Activated CD8-positive, alpha-beta T cell treated with anti-CD3 and anti-CD28 coated beads, Interleukin-2, amount 10 ng/mL, durations not matched to agents 7 days and 5 days (primary cell): ENCODE measurements at regions of chr3 and their contacts with region 1.

Region 1: DNA sequence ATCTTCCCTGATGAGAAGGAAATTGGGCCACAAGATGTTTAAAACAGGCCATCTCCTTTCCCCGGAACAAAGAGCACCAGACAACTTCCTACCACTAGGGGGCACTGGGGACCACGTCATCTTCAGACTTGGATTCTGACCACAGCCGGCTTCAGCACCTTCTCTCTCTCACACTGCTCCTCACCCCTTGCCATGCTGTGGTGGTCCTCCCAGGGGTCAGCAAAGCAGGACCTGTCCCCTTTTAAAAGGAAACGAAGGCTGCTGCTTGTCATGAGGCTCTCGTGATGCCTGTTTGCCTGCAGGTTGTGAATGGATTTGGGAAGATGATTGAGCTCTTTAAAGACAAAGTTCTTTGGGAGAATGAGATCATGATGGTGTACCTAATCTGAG is 16.2 kb downstream of the RFT1 start:
- DNase-seq: peak; percentile 91
- ATAC-seq: peak; percentile 82
- H3K4me3 Mint-ChIP-seq: no peak overlapping the region
- H3K27ac Mint-ChIP-seq: no peak overlapping the region
- H3K4me1 Mint-ChIP-seq: peaks cover 17% of the 10 kb centered on the region
- H3K27me3 Mint-ChIP-seq: no peaks in the 10 kb centered on the region

Region 2: GRCh38 chr3:52820736-52821135 is 293.3 kb before region 1 on chr3:
- CTCF ChIA-PET with region 1: no interaction called
- POLR2A ChIA-PET with region 1: no interaction called
- DNase-seq: peak; percentile 38
- ATAC-seq: peak; percentile 58
- H3K4me3 Mint-ChIP-seq: no peak overlapping the region
- H3K27ac Mint-ChIP-seq: no peak overlapping the region
- H3K4me1 Mint-ChIP-seq: no peaks in the 10 kb centered on the region
- H3K27me3 Mint-ChIP-seq: no peaks in the 10 kb centered on the region

Region 3: GRCh38 chr3:53072653-53073552 is 41.1 kb before region 1 on chr3:
- CTCF ChIA-PET with region 1: interaction called, 11 read pairs
- POLR2A ChIA-PET with region 1: no interaction called
- DNase-seq: peak; percentile 94
- ATAC-seq: peak; percentile 96
- H3K4me3 Mint-ChIP-seq: peak overlapping the region; percentile 84
- H3K27ac Mint-ChIP-seq: peak overlapping the region; percentile 97
- H3K4me1 Mint-ChIP-seq: peaks cover 27% of the 10 kb centered on the region
- H3K27me3 Mint-ChIP-seq: no peaks in the 10 kb centered on the region

Region 4: GRCh38 chr3:53102601-53103147 is 11.3 kb before region 1 on chr3:
- CTCF ChIA-PET with region 1: interaction called, 34 read pairs
- POLR2A ChIA-PET with region 1: interaction called, 4 read pairs
- DNase-seq: peak; percentile 68
- ATAC-seq: peak; percentile 90
- H3K4me3 Mint-ChIP-seq: peak overlapping the region; percentile 57
- H3K27ac Mint-ChIP-seq: peak overlapping the region; percentile 90
- H3K4me1 Mint-ChIP-seq: peaks cover 71% of the 10 kb centered on the region
- H3K27me3 Mint-ChIP-seq: no peaks in the 10 kb centered on the region

Region 5: DNA sequence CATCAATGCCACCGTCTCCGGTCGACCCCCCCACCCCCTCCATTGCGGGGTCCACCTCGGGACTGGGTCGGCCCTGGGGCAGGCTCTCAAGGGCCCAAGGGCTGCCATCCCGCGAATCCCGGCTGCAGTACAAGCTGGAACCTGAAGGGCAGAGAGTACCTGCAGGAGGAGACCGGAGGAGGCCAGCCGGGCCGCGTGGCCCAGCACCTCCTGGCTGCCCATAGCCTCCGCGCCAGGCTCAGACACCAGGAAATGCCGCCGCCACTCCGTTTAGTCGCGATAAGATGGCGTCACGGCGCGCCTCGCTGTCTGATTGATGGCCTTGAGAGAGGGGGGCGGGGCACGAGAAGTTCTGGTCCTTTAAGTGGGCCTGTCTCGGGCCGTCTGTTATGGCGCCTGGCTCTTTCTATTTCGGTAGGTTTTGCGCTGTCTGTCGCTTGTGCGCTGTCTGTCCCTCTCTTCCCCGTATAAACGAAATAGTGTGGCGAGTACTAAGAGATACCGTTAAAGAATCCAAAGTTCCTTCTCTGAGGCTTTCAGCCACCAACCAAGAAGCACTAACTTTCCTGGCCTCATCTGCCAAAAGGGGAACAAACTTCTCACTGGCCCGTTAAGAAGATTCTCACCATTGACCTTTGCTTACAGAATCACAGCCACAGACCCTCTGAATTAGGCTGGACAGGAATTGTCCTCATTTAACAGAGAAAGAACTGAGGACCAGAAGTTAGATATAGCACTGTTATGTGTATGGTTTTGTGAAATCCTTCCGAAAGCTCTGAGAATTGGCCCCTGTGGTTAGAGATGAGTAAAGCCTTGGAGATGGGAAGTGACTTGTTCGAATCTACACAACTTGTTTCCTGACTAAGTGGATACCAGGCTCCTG is 16.4 kb after region 1 on chr3 and contains the start of gene RFT1:
- CTCF ChIA-PET with region 1: interaction called, 35 read pairs
- POLR2A ChIA-PET with region 1: interaction called, 6 read pairs
- DNase-seq: peak; percentile 99
- ATAC-seq: peak; percentile 95
- H3K4me3 Mint-ChIP-seq: peak within 1 kb of the TSS; percentile 82
- H3K27ac Mint-ChIP-seq: peak within 1 kb of the TSS; percentile 89
- H3K4me1 Mint-ChIP-seq: peaks cover 26% of the 10 kb centered on the region
- H3K27me3 Mint-ChIP-seq: no peaks in the 10 kb centered on the region
- total RNA-seq, gene RFT1: 31.7 to 32.3 TPM

Region 6: GRCh38 chr3:53170325-53171063 is 56.5 kb after region 1 on chr3:
- CTCF ChIA-PET with region 1: interaction called, 12 read pairs
- POLR2A ChIA-PET with region 1: no interaction called
- DNase-seq: peak; percentile 56
- ATAC-seq: peak; percentile 19
- H3K4me3 Mint-ChIP-seq: no peak overlapping the region
- H3K27ac Mint-ChIP-seq: peak overlapping the region; percentile 49
- H3K4me1 Mint-ChIP-seq: peaks cover 54% of the 10 kb centered on the region
- H3K27me3 Mint-ChIP-seq: no peaks in the 10 kb centered on the region

Region 7: GRCh38 chr3:53195602-53196574 is 81.9 kb after region 1 on chr3:
- CTCF ChIA-PET with region 1: interaction called, 220 read pairs
- POLR2A ChIA-PET with region 1: interaction called, 3 read pairs
- DNase-seq: peak; percentile 60
- ATAC-seq: peak; percentile 74
- H3K4me3 Mint-ChIP-seq: no peak overlapping the region
- H3K27ac Mint-ChIP-seq: no peak overlapping the region
- H3K4me1 Mint-ChIP-seq: peaks cover 20% of the 10 kb centered on the region
- H3K27me3 Mint-ChIP-seq: peaks cover 4% of the 10 kb centered on the region